Stomach (tissue), 19 donors: ENCODE measurements at regions of chr11 and their contacts with region 1.

Region 1: GRCh38 chr11:78651923-78652842 is 77.5 kb upstream of the NARS2 start:
- DNase-seq: no peak
- H3K4me3 ChIP-seq: no peak overlapping the region
- H3K27ac ChIP-seq: no peak overlapping the region
- H3K4me1 ChIP-seq: no peaks in the 10 kb centered on the region
- H3K27me3 ChIP-seq: peaks cover 0 to under 1% (median 0%) of the 10 kb centered on the region in 3 donors
- CTCF ChIP-seq: no peak
- EP300 ChIP-seq: no peak
- POLR2A ChIP-seq: no peak

Region 2: DNA sequence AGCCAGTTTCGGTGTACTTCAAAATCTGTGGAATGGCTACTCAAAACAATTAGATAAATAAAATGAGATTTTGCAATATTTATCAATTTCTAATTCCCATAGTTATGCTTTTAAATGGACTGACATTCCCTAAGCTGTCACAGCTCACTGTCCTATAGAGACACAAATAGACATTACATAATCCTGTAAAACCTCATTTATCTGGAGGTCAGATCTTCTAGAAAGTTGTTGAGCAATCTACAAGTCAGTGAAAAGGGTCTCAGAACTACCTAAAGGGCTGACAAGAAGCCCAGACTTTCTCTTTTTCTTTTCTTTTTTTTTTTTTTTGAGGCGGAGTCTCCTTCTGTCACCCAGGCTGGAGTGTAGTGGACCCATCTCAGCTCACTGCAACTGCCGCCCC is 524.8 kb before region 1 on chr11:
- intact Hi-C with region 1: no loop called
- DNase-seq: no peak
- H3K4me3 ChIP-seq: no peak overlapping the region
- H3K27ac ChIP-seq: no peak overlapping the region
- H3K4me1 ChIP-seq: peaks cover 0 to 3% (median 0%) of the 10 kb centered on the region in 4 donors
- H3K27me3 ChIP-seq: no peaks in the 10 kb centered on the region
- CTCF ChIP-seq: no peak
- EP300 ChIP-seq: no peak
- POLR2A ChIP-seq: no peak

Region 3: DNA sequence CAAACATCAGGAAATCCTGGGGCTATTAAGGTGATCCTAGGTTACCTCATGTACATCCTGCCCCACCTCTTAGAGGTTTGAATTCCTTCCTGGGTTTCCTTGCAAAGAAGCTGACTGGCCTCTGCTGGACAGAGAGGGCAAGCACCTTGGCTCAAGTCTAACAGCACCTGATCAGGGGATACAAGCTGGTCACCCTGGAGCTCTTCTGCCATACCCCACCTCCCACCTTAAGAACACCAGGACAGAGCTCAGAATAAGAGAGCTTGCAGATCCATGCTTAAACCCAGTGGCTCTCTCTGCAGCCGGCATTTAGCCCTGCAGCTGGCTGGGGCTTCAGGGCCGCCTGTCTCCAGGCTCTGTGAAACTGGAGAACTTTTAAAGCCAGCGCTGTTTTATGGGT is 309.1 kb after region 1 on chr11:
- intact Hi-C with region 1: loop called (anchors 5 kb)
- DNase-seq: peak; percentile 28 to 63
- H3K4me3 ChIP-seq: no peak overlapping the region
- H3K27ac ChIP-seq: no peak overlapping the region
- H3K4me1 ChIP-seq: peaks cover 0 to 13% (median 4%) of the 10 kb centered on the region in 4 donors
- H3K27me3 ChIP-seq: peaks cover 0 to 29% (median 13%) of the 10 kb centered on the region in 3 donors
- CTCF ChIP-seq: peak in 5 of 7 experiments; percentile 16 to 43 (median 23)
- EP300 ChIP-seq: no peak
- POLR2A ChIP-seq: no peak

Region 4: DNA sequence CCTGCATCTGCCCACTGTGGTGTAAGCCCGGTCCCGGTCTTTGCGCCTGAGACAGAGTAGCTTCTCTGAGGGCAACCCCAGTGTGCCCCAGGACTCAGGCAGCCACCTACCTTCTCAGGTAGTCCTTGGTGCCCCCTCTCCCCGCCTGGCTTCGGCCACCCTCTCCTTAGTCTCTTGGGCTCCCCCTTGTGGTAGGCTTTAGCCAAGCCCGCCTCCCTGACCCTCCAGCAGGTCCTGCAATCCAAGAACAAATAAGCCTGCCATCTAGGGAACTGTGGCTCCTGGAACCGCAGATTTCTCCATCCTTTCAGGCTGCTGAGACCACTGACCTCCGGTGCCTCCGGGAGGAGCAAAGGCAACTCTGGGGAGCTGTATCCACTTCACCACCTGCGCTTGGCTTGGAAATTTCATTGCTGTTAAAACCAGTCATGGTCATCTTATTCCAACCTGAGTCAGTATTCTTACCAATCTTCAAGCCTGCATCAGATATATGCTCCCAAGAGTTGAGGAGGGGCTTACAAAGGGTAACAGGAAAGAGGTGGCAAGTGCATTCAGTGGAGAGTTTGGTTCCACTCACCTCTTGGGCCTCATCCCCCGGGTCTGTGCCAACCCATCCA is 841.5 kb after region 1 on chr11:
- intact Hi-C with region 1: loop called (anchors 5 kb)
- DNase-seq: peak; percentile 72 to 90
- H3K4me3 ChIP-seq: no peak overlapping the region
- H3K27ac ChIP-seq: no peak overlapping the region
- H3K4me1 ChIP-seq: peaks cover 0 to 5% (median 0%) of the 10 kb centered on the region in 4 donors
- H3K27me3 ChIP-seq: peaks cover 0 to 17% (median 0%) of the 10 kb centered on the region in 3 donors
- CTCF ChIP-seq: peak in 4 of 7 experiments; percentile 65 to 86 (median 73)
- EP300 ChIP-seq: no peak
- POLR2A ChIP-seq: no peak